MCF 10A (cell line): ENCODE measurements at regions of chr22 and their contacts with region 1.

Region 1: GRCh38 chr22:31080848-31081649 is at the start of gene SMTN:
- DNase-seq: peak; percentile 93
- H3K4me3 Mint-ChIP-seq: peak within 1 kb of the TSS; percentile 86
- H3K27ac Mint-ChIP-seq: peak within 1 kb of the TSS; percentile 93
- H3K4me1 Mint-ChIP-seq: peaks cover 33% of the 10 kb centered on the region
- H3K27me3 Mint-ChIP-seq: no peaks in the 10 kb centered on the region
- CTCF ChIP-seq: no peak
- total RNA-seq, gene SMTN: 69.5 and 80.2 TPM in 2 replicates

Region 2: GRCh38 chr22:30763815-30764686 is 317.0 kb before region 1 on chr22:
- CTCF ChIA-PET with region 1: interaction called, 4 read pairs
- POLR2A ChIA-PET with region 1: no interaction called
- intact Hi-C with region 1: loop called (anchors 2 kb)
- DNase-seq: peak; percentile 91
- H3K4me3 Mint-ChIP-seq: no peak overlapping the region
- H3K27ac Mint-ChIP-seq: peak overlapping the region; percentile 10
- H3K4me1 Mint-ChIP-seq: peaks cover 10% of the 10 kb centered on the region
- H3K27me3 Mint-ChIP-seq: no peaks in the 10 kb centered on the region
- CTCF ChIP-seq: peak; percentile 71

Region 3: DNA sequence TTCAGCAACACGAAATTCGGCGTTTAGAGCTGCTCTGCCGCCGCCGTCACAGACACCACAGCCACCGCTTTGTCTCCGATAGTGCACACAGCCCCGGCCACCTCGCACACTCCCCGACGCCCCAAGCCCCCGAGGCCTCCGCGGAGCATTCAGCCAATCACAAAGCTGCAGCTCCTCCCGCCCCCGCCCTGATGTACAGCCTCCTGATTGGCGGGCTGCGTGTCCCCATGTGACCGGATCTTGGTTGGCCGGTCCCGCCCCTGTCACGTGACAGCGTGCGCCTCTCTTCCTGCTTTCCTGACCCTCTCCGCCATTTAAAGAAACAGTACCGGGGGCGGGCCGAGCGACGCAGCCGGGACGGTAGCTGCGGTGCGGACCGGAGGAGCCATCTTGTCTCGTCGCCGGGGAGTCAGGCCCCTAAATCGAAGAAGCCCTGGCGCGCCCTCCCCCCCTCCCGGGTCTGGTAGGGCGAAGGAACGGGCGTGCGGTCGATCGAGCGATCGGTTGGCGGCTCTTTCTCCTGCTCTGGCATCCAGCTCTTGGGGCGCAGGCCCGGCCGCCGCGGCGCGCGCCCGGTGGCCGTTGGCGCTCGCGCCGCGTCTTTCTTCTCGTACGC is 112.0 kb before region 1 on chr22 and contains the start of gene TUG1:
- CTCF ChIA-PET with region 1: interaction called, 8 read pairs
- POLR2A ChIA-PET with region 1: interaction called, 99 read pairs
- intact Hi-C with region 1: loop called (anchors 1 kb)
- DNase-seq: peak; percentile 98
- H3K4me3 Mint-ChIP-seq: peak within 1 kb of the TSS; percentile 88
- H3K27ac Mint-ChIP-seq: peak within 1 kb of the TSS; percentile 88
- H3K4me1 Mint-ChIP-seq: peaks cover 28% of the 10 kb centered on the region
- H3K27me3 Mint-ChIP-seq: no peaks in the 10 kb centered on the region
- CTCF ChIP-seq: no peak
- total RNA-seq, gene TUG1: 85.5 and 99.0 TPM in 2 replicates

Region 4: GRCh38 chr22:31055635-31056159 is 25.4 kb before region 1 on chr22:
- CTCF ChIA-PET with region 1: interaction called, 4 read pairs
- POLR2A ChIA-PET with region 1: interaction called, 80 read pairs
- intact Hi-C with region 1: loop called (anchors 2 kb)
- DNase-seq: peak; percentile 97
- H3K4me3 Mint-ChIP-seq: no peak overlapping the region
- H3K27ac Mint-ChIP-seq: peak overlapping the region; percentile 84
- H3K4me1 Mint-ChIP-seq: peaks cover 9% of the 10 kb centered on the region
- H3K27me3 Mint-ChIP-seq: no peaks in the 10 kb centered on the region
- CTCF ChIP-seq: no peak

Region 5: GRCh38 chr22:31096657-31097279 is 15.7 kb after region 1 on chr22:
- CTCF ChIA-PET with region 1: interaction called, 10 read pairs
- POLR2A ChIA-PET with region 1: interaction called, 10 read pairs
- intact Hi-C with region 1: no loop called
- DNase-seq: no peak
- H3K4me3 Mint-ChIP-seq: no peak overlapping the region
- H3K27ac Mint-ChIP-seq: peak overlapping the region; percentile 33
- H3K4me1 Mint-ChIP-seq: peaks cover 4% of the 10 kb centered on the region
- H3K27me3 Mint-ChIP-seq: no peaks in the 10 kb centered on the region
- CTCF ChIP-seq: no peak